WTC11 (cell line): ENCODE measurements at regions of chr3 and their contacts with region 1.

Region 1: DNA sequence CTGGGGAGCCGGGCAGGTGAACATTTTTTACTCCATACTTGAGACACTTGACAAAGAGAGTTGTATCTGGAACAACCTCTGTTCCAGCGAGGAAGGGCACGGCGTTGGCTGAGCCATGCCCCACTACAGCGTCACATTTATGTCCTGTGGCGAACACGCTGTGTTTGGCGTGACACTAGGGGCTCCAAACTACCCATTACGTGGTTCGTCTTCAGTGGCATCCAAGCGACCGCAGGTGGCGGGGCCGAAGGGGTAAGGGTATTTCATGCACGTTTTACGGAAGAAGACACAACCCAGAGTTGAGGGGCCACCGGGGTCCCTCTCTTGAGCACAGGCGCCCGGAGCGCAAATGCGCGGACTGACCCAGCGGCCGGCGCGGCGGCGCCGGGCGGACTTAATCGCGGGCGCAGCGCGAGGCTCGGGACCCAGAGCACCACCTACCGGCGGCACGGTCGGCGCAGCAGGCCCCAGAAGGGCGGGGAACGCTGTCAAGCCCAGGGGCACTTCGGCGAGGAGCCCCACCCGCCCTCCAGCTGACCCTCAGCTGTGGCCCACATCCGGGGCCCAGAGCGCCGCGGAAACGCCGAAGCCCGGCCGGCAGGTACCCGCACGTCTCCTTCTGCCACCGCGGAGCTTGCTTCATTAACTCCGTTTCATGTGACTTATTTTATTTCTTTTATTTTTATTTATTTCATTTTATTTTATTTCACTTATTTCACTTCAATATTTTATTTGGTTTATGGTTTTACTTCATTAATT is 36.4 kb upstream of the TRIM71 start:
- DNase-seq: peak; percentile 94
- ATAC-seq: peak; percentile 57
- H3K4me3 Mint-ChIP-seq: peak overlapping the region; percentile 85
- H3K27ac Mint-ChIP-seq: peak overlapping the region; percentile 99
- H3K4me1 Mint-ChIP-seq: peaks cover 60% of the 10 kb centered on the region
- H3K27me3 Mint-ChIP-seq: no peaks in the 10 kb centered on the region; the same call in 1 of the 2 replicates
- CTCF ChIP-seq: peak; percentile 65

Region 2: DNA sequence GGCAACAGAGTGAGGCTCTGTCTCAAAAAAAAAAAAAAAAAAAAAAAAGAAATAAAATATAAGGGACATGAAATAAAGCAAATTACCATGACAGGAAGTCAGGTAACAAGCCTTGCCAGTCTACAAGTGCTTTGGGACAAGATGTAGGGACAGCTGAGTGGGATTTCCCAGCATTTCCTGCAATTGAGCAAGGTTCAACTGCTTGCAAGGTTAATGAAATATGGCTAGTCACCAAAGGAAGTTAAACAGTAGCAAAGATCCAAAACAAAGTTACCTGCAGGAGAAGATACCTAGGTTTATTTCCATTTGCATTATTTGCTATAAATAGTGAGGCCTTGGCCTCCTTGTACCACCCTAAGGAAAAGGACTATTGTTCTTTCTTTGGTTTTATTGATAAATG is 118.7 kb before region 1 on chr3:
- CTCF ChIA-PET with region 1: no interaction called
- POLR2A ChIA-PET with region 1: no interaction called
- DNase-seq: no peak
- ATAC-seq: no peak
- H3K4me3 Mint-ChIP-seq: no peak overlapping the region
- H3K27ac Mint-ChIP-seq: no peak overlapping the region
- H3K4me1 Mint-ChIP-seq: no peaks in the 10 kb centered on the region
- H3K27me3 Mint-ChIP-seq: no peaks in the 10 kb centered on the region
- CTCF ChIP-seq: no peak

Region 3: DNA sequence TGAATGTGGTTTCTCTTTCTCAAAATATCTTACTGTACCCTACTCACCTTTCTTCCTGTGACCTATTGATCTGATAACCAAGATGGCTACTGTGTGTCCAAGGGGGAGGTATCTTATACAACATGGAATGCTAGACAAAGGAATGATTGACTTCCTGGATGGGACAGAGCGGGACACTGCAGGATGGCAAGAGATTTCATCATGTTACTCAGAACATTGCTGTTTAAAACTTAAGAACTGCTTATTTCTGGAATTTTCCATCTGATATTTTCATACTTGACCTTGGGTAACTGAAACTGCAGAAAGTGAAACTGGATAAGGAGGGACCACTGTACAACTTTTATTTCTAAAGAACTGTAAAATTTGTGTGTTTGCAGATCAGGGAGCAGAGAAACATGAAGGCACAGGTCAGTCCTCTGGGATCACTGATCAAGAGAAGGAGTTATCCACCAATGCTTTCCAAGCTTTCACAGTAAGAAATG is 77.9 kb before region 1 on chr3:
- CTCF ChIA-PET with region 1: no interaction called
- POLR2A ChIA-PET with region 1: no interaction called
- DNase-seq: no peak
- ATAC-seq: no peak
- H3K4me3 Mint-ChIP-seq: no peak overlapping the region
- H3K27ac Mint-ChIP-seq: peak overlapping the region; percentile 58
- H3K4me1 Mint-ChIP-seq: peaks cover 5% of the 10 kb centered on the region
- H3K27me3 Mint-ChIP-seq: no peaks in the 10 kb centered on the region
- CTCF ChIP-seq: no peak

Region 4: DNA sequence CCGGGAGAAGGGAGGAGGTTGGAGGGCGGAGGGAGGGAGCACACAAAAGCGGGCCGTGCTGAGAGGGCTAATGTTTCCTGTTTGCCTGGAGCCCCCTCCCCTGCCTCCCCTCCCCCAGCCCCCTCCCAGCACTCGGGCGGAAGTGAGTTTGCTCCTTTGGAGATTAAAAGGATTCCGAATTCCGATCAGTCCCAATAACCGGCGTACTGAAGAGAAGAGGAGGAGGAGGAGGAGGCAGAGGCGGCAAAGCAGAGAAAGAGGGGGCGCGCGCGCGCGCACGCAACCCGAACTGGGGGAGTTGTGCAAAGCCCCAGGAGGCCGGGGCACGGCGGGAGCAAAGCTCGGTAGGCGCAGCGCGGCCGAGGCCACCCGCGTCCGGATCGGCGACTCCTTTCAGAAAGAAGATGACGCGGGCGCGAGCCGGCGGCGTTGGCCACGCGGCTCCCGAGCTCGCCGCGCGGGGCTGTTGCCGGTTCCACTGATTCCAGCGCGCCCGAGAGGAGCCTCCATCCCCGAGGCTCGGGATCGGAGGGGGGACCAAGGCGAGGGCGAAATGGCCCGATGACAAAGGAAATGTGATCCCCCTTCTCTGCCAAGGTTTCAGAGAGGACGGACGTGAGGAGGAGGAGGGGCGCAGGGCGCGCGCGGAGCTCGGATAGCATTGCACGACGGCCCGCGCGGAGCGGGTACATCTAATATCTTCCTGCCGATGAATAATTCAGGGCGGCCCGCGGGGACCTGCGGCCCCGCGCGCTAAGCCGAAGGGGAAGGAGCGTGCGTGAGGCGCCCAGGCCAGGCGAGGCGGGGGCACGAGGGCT is 35.3 kb after region 1 on chr3:
- CTCF ChIA-PET with region 1: interaction called, 28 read pairs
- POLR2A ChIA-PET with region 1: interaction called, 34 read pairs
- DNase-seq: peak; percentile 88
- ATAC-seq: peak; percentile 81
- H3K4me3 Mint-ChIP-seq: peak overlapping the region; percentile 94
- H3K27ac Mint-ChIP-seq: peak overlapping the region; percentile 95
- H3K4me1 Mint-ChIP-seq: peaks cover 38% of the 10 kb centered on the region
- H3K27me3 Mint-ChIP-seq: peaks cover 7% of the 10 kb centered on the region; the same call in 1 of the 2 replicates
- CTCF ChIP-seq: no peak

Region 5: DNA sequence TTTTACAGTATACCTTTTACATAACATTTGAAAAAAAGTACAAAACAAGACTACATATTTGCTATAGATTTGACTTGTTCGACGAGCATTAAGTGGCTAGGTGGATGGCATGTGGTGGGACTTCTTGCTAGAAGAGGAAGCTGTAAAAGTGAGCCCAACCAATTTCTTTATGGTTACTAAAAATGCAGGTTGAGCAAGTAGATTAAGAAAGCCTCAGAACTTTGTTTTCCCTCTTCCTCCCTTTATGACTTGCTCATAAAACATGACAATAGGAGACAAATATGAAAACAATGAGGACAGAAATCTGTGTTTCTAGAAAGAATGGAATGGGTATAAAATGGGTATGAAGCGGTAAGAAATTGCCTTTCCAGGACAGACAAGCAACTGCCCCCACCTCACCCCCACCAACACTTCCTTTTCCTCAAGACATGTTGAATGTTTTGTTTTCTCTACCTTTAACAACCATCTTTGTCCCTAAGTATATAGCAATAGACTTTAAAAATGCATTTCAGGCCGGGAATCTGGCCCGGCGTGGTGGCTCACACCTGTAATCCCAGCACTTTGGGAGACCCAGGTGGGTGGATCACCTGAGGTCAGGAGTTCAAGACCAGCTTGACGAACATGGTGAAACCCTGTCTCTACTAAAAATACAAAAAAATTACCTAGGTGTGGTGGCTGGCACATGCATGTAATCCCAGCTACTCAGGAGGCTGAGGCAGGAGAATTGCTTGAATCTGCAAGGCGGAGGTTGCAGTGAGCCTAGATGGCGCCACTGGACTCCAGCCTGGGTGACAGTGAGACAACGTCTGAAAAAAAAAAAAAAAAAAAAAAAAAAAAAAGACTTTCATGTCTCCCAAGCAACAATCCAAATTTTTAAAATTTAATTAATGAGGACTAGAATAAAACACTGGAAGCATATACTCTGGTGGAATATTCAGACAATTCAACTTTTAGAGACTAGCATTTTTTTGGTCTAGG is 120.3 kb after region 1 on chr3:
- CTCF ChIA-PET with region 1: interaction called, 14 read pairs
- POLR2A ChIA-PET with region 1: interaction called, 3 read pairs
- DNase-seq: peak; percentile 57
- ATAC-seq: peak; percentile 13
- H3K4me3 Mint-ChIP-seq: peak overlapping the region; percentile 29; the same call in 1 of the 2 replicates
- H3K27ac Mint-ChIP-seq: peak overlapping the region; percentile 23
- H3K4me1 Mint-ChIP-seq: peaks cover 28% of the 10 kb centered on the region
- H3K27me3 Mint-ChIP-seq: no peaks in the 10 kb centered on the region
- CTCF ChIP-seq: no peak

Region 6: GRCh38 chr3:32922078-32922477 is 140.7 kb after region 1 on chr3:
- CTCF ChIA-PET with region 1: no interaction called
- POLR2A ChIA-PET with region 1: no interaction called
- DNase-seq: no peak
- ATAC-seq: no peak
- H3K4me3 Mint-ChIP-seq: no peak overlapping the region
- H3K27ac Mint-ChIP-seq: no peak overlapping the region
- H3K4me1 Mint-ChIP-seq: no peaks in the 10 kb centered on the region
- H3K27me3 Mint-ChIP-seq: no peaks in the 10 kb centered on the region; the same call in 1 of the 2 replicates
- CTCF ChIP-seq: no peak